A673 (cell line): ENCODE measurements at regions of chr10 and their contacts with region 1.

Region 1: GRCh38 chr10:35218339-35218955 is 91.8 kb downstream of the CREM start:
- DNase-seq: peak; percentile 97
- H3K4me3 ChIP-seq: no peak overlapping the region
- H3K27ac ChIP-seq: no peak overlapping the region
- H3K4me1 ChIP-seq: peaks cover 24% of the 10 kb centered on the region
- H3K27me3 ChIP-seq: no peaks in the 10 kb centered on the region
- CTCF ChIP-seq: peak; percentile 91

Region 2: DNA sequence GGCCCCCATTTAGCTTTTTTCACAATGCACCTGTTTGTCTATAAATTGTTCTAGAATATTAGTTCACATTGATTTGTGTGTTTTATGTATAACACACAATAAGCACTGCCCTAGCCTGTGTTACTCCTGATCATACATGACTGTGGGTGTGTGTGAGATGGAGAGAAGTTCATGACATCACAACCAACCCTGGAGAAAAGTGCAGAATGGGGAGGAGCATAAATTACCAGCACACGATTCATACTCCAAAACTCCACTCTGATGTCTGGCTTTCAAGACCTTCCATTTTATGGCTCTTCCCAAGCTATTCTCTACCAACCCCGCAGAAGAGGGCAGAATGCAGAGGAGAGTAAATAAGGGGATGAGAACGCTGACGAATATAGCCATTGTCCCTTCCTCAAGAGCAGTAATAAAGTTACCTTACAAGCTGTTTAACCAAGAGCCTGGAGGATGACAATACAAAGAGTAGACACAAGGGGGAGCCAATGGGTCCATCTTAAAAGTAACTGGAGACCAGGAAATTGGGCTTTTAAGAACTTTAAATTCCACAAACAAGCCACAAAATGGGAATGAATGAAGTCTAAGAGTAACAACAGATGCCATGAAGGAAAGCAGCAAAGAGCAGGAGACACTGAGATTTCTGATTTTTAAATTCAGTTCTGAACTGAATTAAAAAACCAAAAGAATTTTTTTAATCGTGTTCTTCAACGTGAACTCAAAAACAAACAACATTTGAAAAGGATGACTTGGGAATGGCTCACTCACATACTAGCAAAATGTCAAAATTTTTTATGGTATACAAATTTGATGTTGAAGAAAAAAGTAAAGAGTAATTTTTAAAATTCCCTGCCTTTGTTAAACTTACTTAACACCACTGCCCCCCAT is 562.9 kb before region 1 on chr10:
- CTCF ChIA-PET with region 1: no interaction called
- POLR2A ChIA-PET with region 1: no interaction called
- intact Hi-C with region 1: loop called (anchors 10 kb)
- DNase-seq: peak; percentile 80
- H3K4me3 ChIP-seq: no peak overlapping the region
- H3K27ac ChIP-seq: no peak overlapping the region
- H3K4me1 ChIP-seq: peaks cover 28% of the 10 kb centered on the region
- H3K27me3 ChIP-seq: no peaks in the 10 kb centered on the region
- CTCF ChIP-seq: peak; percentile 77

Region 3: DNA sequence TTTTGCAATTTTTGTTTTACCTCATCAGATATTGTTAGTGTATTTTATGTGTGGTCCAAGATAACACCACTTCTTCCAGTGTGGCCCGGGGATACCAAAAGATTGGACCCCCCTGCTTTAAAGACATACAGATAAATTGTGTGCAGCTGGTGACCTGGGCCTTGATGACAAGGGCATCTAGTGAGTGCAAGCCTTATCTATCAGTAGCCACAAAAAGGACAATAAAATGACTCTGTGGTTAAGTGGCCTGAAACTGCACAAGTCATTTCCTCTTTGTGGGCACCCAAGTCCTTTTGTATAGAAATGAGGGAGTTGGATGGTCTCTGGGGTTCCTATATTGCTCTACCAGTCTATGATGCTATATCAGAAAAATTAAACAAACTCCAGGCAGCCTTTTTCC is 501.5 kb before region 1 on chr10:
- CTCF ChIA-PET with region 1: no interaction called
- POLR2A ChIA-PET with region 1: interaction called, 15 read pairs
- intact Hi-C with region 1: no loop called
- DNase-seq: no peak
- H3K4me3 ChIP-seq: no peak overlapping the region
- H3K27ac ChIP-seq: no peak overlapping the region
- H3K4me1 ChIP-seq: peaks cover 10% of the 10 kb centered on the region
- H3K27me3 ChIP-seq: no peaks in the 10 kb centered on the region
- CTCF ChIP-seq: no peak

Region 4: GRCh38 chr10:34994565-34995142 is 223.8 kb before region 1 on chr10:
- CTCF ChIA-PET with region 1: interaction called, 3 read pairs
- POLR2A ChIA-PET with region 1: no interaction called
- intact Hi-C with region 1: loop called (anchors 10 kb)
- DNase-seq: peak; percentile 77
- H3K4me3 ChIP-seq: no peak overlapping the region
- H3K27ac ChIP-seq: no peak overlapping the region
- H3K4me1 ChIP-seq: no peaks in the 10 kb centered on the region
- H3K27me3 ChIP-seq: no peaks in the 10 kb centered on the region
- CTCF ChIP-seq: peak; percentile 80